Dorsolateral prefrontal cortex (tissue), 120 donors: ENCODE measurements at regions of chrX and their contacts with region 1.

Region 1: DNA sequence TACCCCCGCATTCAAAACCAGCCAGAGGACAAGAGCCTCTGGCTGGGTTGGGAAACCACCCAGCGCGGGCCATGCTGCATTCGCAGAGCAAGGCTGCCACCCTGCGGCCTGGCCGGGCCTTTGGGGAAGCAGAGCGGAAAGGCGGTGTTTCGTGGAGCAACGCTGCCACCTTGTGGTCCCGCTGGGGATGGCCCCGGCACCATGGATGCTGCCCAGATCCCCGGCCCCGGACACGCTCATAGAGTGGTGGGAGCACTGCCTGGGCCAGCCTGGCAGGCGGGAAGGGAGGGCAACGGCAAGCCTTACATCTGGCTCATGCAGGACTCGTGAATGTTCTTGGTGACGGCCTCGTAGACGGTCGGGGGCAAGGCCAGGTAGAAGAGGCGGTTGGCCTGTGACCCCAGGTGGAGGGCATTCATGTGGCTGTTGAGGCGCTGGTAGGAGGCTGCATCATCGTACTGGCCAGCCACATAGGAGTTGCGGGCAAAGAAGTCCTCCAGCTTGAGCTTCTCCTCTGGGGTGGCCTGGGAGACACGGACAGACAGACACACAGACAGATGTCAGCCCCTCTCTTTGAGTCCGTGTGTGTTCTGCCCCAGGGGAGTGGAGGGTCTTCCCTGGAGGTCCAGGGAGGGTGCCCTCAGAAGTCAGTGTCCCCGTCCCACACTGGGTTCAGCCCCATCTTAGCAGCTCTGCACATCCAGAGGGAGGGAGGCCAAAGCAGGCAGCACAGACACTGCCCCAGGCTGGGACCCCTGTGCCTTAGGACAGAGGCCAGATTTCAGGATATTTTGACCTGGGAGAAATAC is 11.6 kb downstream of the G6PD start:
- DNase-seq: peak; percentile 84 to 93 (median 90)
- H3K4me3 ChIP-seq: peak overlapping the region in 2 of 59 donors; percentile 3 to 31
- H3K27ac ChIP-seq: peak overlapping the region in 46 of 59 donors; percentile 3 to 77 (median 50)
- H3K27me3 ChIP-seq: peaks cover 0 to 50% (median 3%) of the 10 kb centered on the region in 45 donors
- CTCF ChIP-seq: peak; percentile 71 to 100 (median 100)

Region 2: GRCh38 chrX:154370882-154371770 is 163.9 kb before region 1 on chrX:
- intact Hi-C with region 1: loop called (anchors 5 kb)
- DNase-seq: peak; percentile 80 to 95 (median 92)
- H3K4me3 ChIP-seq: peak overlapping the region; percentile 45 to 78 (median 63)
- H3K27ac ChIP-seq: peak overlapping the region in 54 of 59 donors; percentile 16 to 89 (median 74)
- H3K27me3 ChIP-seq: peaks cover 0 to 63% (median 2%) of the 10 kb centered on the region in 45 donors
- CTCF ChIP-seq: peak in 5 of 56 donors; percentile 4 to 40 (median 23)